ENCODE measurements at regions of chr2 and their contacts with region 1.

Region 1: GRCh38 chr2:12709207-12709522 is 7.6 kb upstream of the TRIB2 start:
- DNase-seq: peak in 7 of 9 donors; percentile 28 to 75 (median 66)
- ATAC-seq: peak; percentile 89
- H3K4me3 ChIP-seq: no peak overlapping the region
- H3K4me3 Mint-ChIP-seq: peak overlapping the region; percentile 54 to 77 (median 60)
- H3K27ac ChIP-seq: peak overlapping the region; percentile 9
- H3K27ac Mint-ChIP-seq: peak overlapping the region; percentile 70 to 96 (median 90)
- H3K4me1 ChIP-seq: peaks cover 41 to 50% of the 10 kb centered on the region in 2 donors
- H3K4me1 Mint-ChIP-seq: peaks cover 45 to 88% (median 67%) of the 10 kb centered on the region in 7 donors
- H3K27me3 ChIP-seq: no peaks in the 10 kb centered on the region
- H3K27me3 Mint-ChIP-seq: no peaks in the 10 kb centered on the region

Region 2: DNA sequence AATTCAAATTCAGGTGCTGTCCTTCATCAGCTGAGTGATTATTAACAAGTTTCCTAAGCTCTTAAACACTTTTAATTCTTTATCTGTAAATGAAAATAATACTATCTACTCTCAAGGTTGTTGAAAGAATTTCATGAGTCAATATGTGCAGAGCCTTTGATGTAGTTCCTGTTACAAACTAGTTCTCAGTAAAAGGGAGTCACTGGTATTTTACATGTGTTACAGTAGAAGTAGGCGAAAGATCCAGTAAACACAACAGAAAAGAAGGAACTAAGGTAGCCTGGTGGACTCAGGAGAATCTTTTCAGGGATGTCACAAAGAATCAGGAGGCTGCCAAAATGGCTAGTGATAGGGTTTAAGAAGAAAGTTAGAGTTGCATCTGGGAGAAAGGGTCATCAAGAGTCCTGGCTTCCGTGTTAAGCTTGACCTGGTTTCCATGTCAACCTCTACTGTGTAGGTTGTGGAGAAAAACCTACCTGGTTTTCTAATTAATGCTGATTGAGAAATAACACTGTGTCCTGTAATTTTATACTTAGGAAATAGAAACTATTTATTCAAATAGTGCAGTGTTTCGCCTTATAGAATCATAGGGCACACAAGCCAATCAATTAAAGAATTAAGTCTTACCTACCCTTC is 50.7 kb before region 1 on chr2:
- CTCF ChIA-PET with region 1: no interaction called
- POLR2A ChIA-PET with region 1: no interaction called
- intact Hi-C with region 1: loop called in 1 of 2 experiments (anchors 5 kb)
- DNase-seq: peak in 1 of 9 donors; percentile 7
- ATAC-seq: no peak
- H3K4me3 ChIP-seq: no peak overlapping the region
- H3K4me3 Mint-ChIP-seq: peak overlapping the region in 2 of 10 donors; percentile 3 to 8
- H3K27ac ChIP-seq: no peak overlapping the region
- H3K27ac Mint-ChIP-seq: peak overlapping the region in 4 of 9 donors; percentile 0 to 49 (median 36)
- H3K4me1 ChIP-seq: peaks cover 0 to 9% of the 10 kb centered on the region in 2 donors
- H3K4me1 Mint-ChIP-seq: peaks cover 8 to 36% (median 22%) of the 10 kb centered on the region in 7 donors
- H3K27me3 ChIP-seq: no peaks in the 10 kb centered on the region
- H3K27me3 Mint-ChIP-seq: peaks cover 0 to 3% (median 0%) of the 10 kb centered on the region in 5 donors

Region 3: GRCh38 chr2:12675352-12675795 is 33.8 kb before region 1 on chr2:
- CTCF ChIA-PET with region 1: no interaction called
- POLR2A ChIA-PET with region 1: no interaction called
- intact Hi-C with region 1: loop called in 1 of 2 experiments (anchors 1 kb)
- DNase-seq: no peak
- ATAC-seq: no peak
- H3K4me3 ChIP-seq: no peak overlapping the region
- H3K4me3 Mint-ChIP-seq: no peak overlapping the region
- H3K27ac ChIP-seq: no peak overlapping the region
- H3K27ac Mint-ChIP-seq: peak overlapping the region in 1 of 9 donors; percentile 49
- H3K4me1 ChIP-seq: no peaks in the 10 kb centered on the region
- H3K4me1 Mint-ChIP-seq: peaks cover 0 to 8% (median 4%) of the 10 kb centered on the region in 7 donors
- H3K27me3 ChIP-seq: no peaks in the 10 kb centered on the region
- H3K27me3 Mint-ChIP-seq: peaks cover 0 to 5% (median 0%) of the 10 kb centered on the region in 5 donors